CD4-positive, alpha-beta memory T cell (primary cell): ENCODE measurements at regions of chr20 and their contacts with region 1.

Region 1: GRCh38 chr20:63223221-63224207 is 7.6 kb upstream of the YTHDF1 start:
- DNase-seq: peak; percentile 23 to 55 (median 40)
- H3K4me3 ChIP-seq: no peak overlapping the region
- H3K4me3 Mint-ChIP-seq: no peak overlapping the region
- H3K27ac ChIP-seq: no peak overlapping the region
- H3K27ac Mint-ChIP-seq: peak overlapping the region in 1 of 7 donors; percentile 49
- H3K4me1 ChIP-seq: no peaks in the 10 kb centered on the region
- H3K4me1 Mint-ChIP-seq: no peaks in the 10 kb centered on the region
- H3K27me3 ChIP-seq: no peaks in the 10 kb centered on the region
- H3K27me3 Mint-ChIP-seq: peaks cover 0 to 8% of the 10 kb centered on the region in 2 donors

Region 2: DNA sequence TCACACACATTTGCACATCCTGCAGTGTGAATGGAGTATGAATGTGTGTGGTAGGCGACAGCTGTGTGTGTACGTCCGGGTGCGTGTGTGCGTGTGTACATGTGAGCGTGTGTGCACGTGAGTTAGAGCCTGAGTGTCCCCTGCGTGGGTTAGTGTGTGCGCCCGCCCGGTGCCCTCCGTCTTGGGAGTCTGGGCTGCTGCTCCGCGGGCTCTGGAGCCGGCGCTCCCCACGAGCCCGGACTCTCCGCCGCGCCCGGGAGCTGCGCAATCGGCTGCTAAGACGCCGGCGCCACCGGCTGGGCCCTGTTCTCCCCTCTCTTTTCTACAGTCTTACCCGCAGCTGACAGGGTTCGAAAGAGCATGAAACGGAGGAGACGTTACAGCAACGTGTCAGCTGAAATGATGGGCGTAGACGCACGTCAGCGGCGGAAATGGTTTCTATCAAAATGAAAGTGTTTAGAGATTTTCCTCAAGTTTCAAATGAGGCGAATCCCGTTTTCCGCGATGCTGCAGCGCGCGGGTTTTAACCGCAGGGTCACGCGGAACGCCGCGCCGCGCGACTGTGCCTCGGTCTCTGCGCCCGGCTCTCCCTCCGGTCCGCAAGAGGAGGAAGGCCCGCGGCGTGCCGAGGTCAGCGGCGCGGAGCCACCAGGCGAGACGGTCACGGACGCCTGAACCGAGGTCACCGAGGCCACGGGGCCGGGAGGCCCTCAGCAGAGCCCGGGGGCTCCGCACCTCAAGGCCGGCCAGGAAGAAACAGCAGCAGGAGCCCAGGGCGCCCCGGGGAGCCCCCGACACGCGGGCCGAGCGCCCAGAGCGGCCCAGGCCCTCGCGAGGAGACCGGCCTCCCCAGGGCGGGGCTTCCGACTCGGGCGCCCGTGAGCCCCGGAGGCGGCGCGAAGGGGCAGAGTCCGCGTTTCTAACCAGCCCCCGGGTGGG is 121.5 kb before region 1 on chr20:
- CTCF ChIA-PET with region 1: no interaction called
- POLR2A ChIA-PET with region 1: no interaction called
- intact Hi-C with region 1: no loop called
- DNase-seq: peak; percentile 73 to 84 (median 82)
- H3K4me3 ChIP-seq: peak overlapping the region; percentile 42 to 86
- H3K4me3 Mint-ChIP-seq: peak overlapping the region; percentile 83 to 92 (median 90)
- H3K27ac ChIP-seq: peak overlapping the region; percentile 91
- H3K27ac Mint-ChIP-seq: peak overlapping the region; percentile 96 to 99 (median 97)
- H3K4me1 ChIP-seq: peaks cover 5% of the 10 kb centered on the region
- H3K4me1 Mint-ChIP-seq: peaks cover 0 to 12% (median 1%) of the 10 kb centered on the region in 4 donors
- H3K27me3 ChIP-seq: no peaks in the 10 kb centered on the region
- H3K27me3 Mint-ChIP-seq: peaks cover 0 to 3% of the 10 kb centered on the region in 2 donors

Region 3: DNA sequence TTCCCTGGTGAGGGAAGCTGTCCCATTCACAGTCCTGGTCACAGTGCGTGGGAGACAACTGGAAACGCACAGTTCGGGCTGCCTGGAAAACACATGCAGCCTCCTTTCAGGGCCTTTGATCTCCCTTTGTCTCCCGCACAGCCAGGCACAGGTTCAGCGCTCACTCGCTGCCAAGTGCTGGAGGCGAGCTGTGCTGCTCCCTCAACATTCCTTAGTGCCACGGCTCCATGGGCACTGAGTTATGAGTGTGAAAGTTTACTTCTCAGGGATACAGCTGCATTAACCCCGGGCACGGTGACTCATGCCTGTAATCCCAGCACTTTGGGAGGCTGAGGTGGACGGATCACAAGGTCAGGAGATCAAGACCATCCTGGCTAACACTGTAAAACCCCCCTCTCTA is 16.6 kb before region 1 on chr20:
- CTCF ChIA-PET with region 1: interaction called, 64 read pairs
- POLR2A ChIA-PET with region 1: no interaction called
- intact Hi-C with region 1: no loop called
- DNase-seq: no peak
- H3K4me3 ChIP-seq: no peak overlapping the region
- H3K4me3 Mint-ChIP-seq: no peak overlapping the region
- H3K27ac ChIP-seq: no peak overlapping the region
- H3K27ac Mint-ChIP-seq: peak overlapping the region in 1 of 7 donors; percentile 78
- H3K4me1 ChIP-seq: peaks cover 25% of the 10 kb centered on the region
- H3K4me1 Mint-ChIP-seq: peaks cover 14 to 69% (median 25%) of the 10 kb centered on the region in 4 donors
- H3K27me3 ChIP-seq: no peaks in the 10 kb centered on the region
- H3K27me3 Mint-ChIP-seq: no peaks in the 10 kb centered on the region

Region 4: DNA sequence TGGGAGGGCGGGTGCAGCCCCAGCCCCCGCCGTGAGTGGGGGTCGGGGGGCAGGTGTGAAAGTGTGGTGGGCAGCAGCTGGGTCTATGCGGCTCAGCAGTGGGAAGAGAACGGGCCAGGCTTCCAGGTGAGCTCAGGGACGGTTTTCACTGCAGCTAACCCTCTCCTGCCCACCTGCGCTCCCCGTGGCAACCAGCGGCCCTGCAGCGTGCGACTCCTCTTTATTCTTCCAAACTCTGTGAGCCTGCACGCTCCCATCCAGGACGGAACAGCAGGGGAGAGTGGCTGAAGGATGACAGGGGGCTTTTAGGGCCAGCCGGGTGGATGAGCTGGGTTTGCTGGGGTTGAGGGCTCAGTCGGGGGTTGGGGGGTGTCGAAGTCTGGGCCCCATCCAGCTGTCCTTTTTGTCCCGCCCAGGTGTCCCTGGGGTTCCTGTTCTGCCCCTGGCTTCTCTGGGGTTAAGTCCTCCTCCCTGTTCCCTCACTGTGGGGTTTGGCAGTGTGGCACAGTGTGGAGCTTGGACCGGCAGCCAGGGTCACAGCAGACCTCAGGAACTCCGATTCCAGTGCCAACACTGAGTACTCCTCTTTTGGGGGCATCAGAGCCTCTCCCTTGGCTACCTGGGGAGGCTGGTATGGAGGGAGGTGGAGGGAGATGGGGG is 11.4 kb after region 1 on chr20:
- CTCF ChIA-PET with region 1: interaction called, 33 read pairs
- POLR2A ChIA-PET with region 1: no interaction called
- intact Hi-C with region 1: no loop called
- DNase-seq: peak in 1 of 5 donors; percentile 22
- H3K4me3 ChIP-seq: no peak overlapping the region
- H3K4me3 Mint-ChIP-seq: peak overlapping the region in 1 of 8 donors; percentile 41
- H3K27ac ChIP-seq: no peak overlapping the region
- H3K27ac Mint-ChIP-seq: peak overlapping the region in 1 of 7 donors; percentile 62
- H3K4me1 ChIP-seq: no peaks in the 10 kb centered on the region
- H3K4me1 Mint-ChIP-seq: peaks cover 0 to 19% (median 0%) of the 10 kb centered on the region in 4 donors
- H3K27me3 ChIP-seq: peaks cover 8% of the 10 kb centered on the region
- H3K27me3 Mint-ChIP-seq: peaks cover 12 to 26% of the 10 kb centered on the region in 2 donors

Region 5: GRCh38 chr20:63272584-63273579 is 49.4 kb after region 1 on chr20 and contains the start of gene ARFGAP1:
- CTCF ChIA-PET with region 1: interaction called, 22 read pairs
- POLR2A ChIA-PET with region 1: no interaction called
- intact Hi-C with region 1: no loop called
- DNase-seq: peak; percentile 84 to 89 (median 87)
- H3K4me3 ChIP-seq: peak within 1 kb of the TSS; percentile 68 to 84
- H3K4me3 Mint-ChIP-seq: peak within 1 kb of the TSS; percentile 88 to 92 (median 91)
- H3K27ac ChIP-seq: peak within 1 kb of the TSS; percentile 76
- H3K27ac Mint-ChIP-seq: peak within 1 kb of the TSS; percentile 85 to 94 (median 93)
- H3K4me1 ChIP-seq: peaks cover 30% of the 10 kb centered on the region
- H3K4me1 Mint-ChIP-seq: peaks cover 16 to 41% (median 24%) of the 10 kb centered on the region in 4 donors
- H3K27me3 ChIP-seq: no peaks in the 10 kb centered on the region
- H3K27me3 Mint-ChIP-seq: peaks cover 0 to under 1% of the 10 kb centered on the region in 2 donors
- total RNA-seq, gene ARFGAP1: 113 to 120 TPM

Region 6: DNA sequence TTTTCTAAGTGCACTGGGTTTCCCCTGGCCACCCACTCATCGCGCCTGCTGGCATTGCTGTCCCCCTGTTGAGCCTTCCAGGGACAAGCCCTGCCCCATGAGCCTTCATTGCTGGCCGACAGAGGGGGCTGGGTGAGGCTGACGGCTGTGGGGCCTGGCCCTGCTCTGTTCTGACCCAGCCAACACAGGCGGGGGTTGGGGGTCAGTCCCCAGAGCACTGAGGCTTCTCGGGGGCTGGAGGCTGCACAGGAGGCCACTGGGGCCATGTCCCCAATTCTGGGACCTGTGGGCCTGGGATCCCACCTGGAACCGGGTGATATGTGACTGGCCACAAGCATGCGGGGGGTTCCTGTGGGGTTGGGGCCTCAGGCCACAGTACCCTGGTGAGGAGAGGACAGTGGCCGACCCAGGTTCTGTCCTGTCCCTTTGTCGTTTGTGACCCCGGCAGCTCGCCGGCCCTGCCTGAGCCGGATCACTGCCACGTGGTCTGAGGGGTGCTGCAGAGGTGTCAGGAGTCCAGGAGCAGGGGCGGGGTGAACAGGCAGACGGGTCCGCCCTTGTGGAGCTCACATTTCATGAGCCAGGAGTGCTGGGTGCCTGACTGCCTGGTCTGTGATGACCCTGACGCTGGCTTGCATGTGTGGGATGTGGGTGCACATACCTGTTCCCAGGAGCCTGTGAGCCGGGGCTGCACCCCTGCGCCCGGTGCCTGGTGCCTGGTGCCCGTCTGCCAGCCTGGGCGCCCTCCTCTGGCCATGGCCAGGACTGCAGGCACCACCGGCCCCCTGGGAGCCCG is 67.4 kb after region 1 on chr20:
- CTCF ChIA-PET with region 1: interaction called, 12 read pairs
- POLR2A ChIA-PET with region 1: no interaction called
- intact Hi-C with region 1: loop called (anchors 1 kb)
- DNase-seq: peak; percentile 41 to 60 (median 50)
- H3K4me3 ChIP-seq: no peak overlapping the region
- H3K4me3 Mint-ChIP-seq: no peak overlapping the region
- H3K27ac ChIP-seq: no peak overlapping the region
- H3K27ac Mint-ChIP-seq: no peak overlapping the region
- H3K4me1 ChIP-seq: peaks cover 10% of the 10 kb centered on the region
- H3K4me1 Mint-ChIP-seq: peaks cover 7 to 14% (median 10%) of the 10 kb centered on the region in 4 donors
- H3K27me3 ChIP-seq: no peaks in the 10 kb centered on the region
- H3K27me3 Mint-ChIP-seq: peaks cover 0 to 4% of the 10 kb centered on the region in 2 donors

Region 7: DNA sequence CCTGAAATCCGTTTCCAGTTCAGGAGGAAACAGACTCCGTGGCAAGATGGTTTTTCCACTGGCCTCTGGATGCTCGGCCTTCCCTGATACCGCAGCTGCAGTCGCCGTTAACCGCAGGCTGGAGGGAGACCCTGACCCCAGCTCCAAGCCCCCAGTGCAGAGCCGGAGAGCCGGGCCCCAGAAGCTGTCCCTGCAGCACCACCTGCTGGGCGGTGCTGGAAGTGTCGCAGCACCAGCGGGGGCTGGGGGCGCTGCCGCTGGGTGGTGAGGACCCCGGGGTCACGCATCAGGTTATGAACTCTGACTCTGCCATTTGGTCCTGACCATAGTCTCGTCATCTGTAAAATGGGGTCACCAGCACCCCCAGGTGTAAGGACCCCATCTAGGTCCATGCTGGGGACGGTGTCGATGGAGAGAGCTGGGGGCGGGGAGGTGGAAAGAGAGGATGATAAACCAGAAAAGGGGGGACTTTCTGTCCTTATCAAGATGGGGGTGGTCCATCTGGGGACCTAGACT is 158.4 kb after region 1 on chr20:
- CTCF ChIA-PET with region 1: interaction called, 44 read pairs
- POLR2A ChIA-PET with region 1: no interaction called
- intact Hi-C with region 1: no loop called
- DNase-seq: peak in 4 of 5 donors; percentile 21 to 41 (median 28)
- H3K4me3 ChIP-seq: no peak overlapping the region
- H3K4me3 Mint-ChIP-seq: no peak overlapping the region
- H3K27ac ChIP-seq: no peak overlapping the region
- H3K27ac Mint-ChIP-seq: no peak overlapping the region
- H3K4me1 ChIP-seq: no peaks in the 10 kb centered on the region
- H3K4me1 Mint-ChIP-seq: no peaks in the 10 kb centered on the region
- H3K27me3 ChIP-seq: no peaks in the 10 kb centered on the region
- H3K27me3 Mint-ChIP-seq: peaks cover 12 to 16% of the 10 kb centered on the region in 2 donors